PC-9 (cell line): ENCODE measurements at regions of chr3 and their contacts with region 1.

Region 1: GRCh38 chr3:48352547-48352946 is 19.1 kb upstream of the SPINK8 start:
- DNase-seq: peak in 1 of 2 experiments; percentile 12
- H3K4me3 ChIP-seq: no peak overlapping the region
- H3K27ac ChIP-seq: no peak overlapping the region
- H3K4me1 ChIP-seq: no peaks in the 10 kb centered on the region; the same call in 1 of the 2 replicates
- H3K27me3 ChIP-seq: no peaks in the 10 kb centered on the region
- CTCF ChIP-seq: no peak

Region 2: DNA sequence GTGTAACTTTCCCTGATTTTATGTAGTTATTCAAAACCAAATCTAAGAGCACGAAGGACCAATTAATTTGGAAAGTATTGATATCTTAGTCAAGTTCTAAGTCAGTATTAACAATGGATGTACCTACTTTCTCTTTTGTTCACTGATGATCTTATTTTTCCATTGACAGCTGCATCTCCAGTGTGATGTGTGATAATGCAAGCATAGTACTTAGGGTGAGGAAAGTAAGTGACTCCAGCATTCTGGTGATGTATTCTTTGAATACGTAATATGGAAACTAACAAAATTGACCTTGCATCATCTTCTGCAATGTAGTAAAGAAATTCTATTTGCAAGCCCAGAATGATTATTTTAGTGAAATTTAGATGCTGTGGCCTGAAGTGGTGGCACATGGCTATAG is 41.8 kb after region 1 on chr3:
- CTCF ChIA-PET with region 1: no interaction called
- POLR2A ChIA-PET with region 1: interaction called, 11 read pairs
- intact Hi-C with region 1: no loop called
- DNase-seq: no peak
- H3K4me3 ChIP-seq: no peak overlapping the region
- H3K27ac ChIP-seq: no peak overlapping the region
- H3K4me1 ChIP-seq: no peaks in the 10 kb centered on the region
- H3K27me3 ChIP-seq: no peaks in the 10 kb centered on the region
- CTCF ChIP-seq: no peak